ENCODE measurements at regions of chr16 and their contacts with region 1.

Region 1: DNA sequence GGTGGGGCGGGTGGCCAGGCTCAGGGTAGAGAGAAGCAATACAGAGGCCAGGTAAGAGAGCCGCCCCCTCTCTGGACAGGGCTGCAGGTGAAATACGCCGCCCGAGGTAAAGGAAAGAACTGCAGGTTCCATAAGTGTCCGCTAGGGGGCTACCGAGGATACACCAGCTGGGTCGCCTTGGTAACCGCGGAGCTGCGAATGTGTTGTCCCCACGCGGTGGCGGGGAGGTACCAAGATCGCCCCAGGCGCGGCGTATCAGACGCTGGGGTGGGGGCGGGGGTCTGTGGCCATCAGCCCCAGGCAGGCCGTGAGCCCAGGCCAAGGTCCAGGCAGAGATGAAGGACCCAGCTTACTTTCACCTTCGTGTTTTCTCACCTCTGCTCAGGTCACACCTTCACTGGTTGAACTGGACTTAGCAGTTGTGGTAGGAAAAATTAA is 18.4 kb upstream of the ZFP90 start:
- DNase-seq: peak; percentile 84
- H3K4me3 Mint-ChIP-seq: peak overlapping the region; percentile 21
- H3K27ac Mint-ChIP-seq: no peak overlapping the region
- H3K4me1 Mint-ChIP-seq: peaks cover 5% of the 10 kb centered on the region
- H3K27me3 Mint-ChIP-seq: peaks cover 5% of the 10 kb centered on the region

Region 2: GRCh38 chr16:68244903-68245853 is 275.5 kb before region 1 on chr16 and contains the start of gene PLA2G15:
- intact Hi-C with region 1: loop called (anchors 10 kb)
- DNase-seq: peak; percentile 92
- H3K4me3 Mint-ChIP-seq: peak within 1 kb of the TSS; percentile 94
- H3K27ac Mint-ChIP-seq: peak within 1 kb of the TSS; percentile 77
- H3K4me1 Mint-ChIP-seq: peaks cover 16% of the 10 kb centered on the region
- H3K27me3 Mint-ChIP-seq: no peaks in the 10 kb centered on the region
- total RNA-seq, gene PLA2G15: 9.0 and 10.3 TPM in 2 replicates

Region 3: GRCh38 chr16:68490829-68491575 is 29.7 kb before region 1 on chr16:
- intact Hi-C with region 1: no loop called
- DNase-seq: no peak
- H3K4me3 Mint-ChIP-seq: no peak overlapping the region
- H3K27ac Mint-ChIP-seq: no peak overlapping the region
- H3K4me1 Mint-ChIP-seq: no peaks in the 10 kb centered on the region
- H3K27me3 Mint-ChIP-seq: peaks cover 14% of the 10 kb centered on the region

Region 4: DNA sequence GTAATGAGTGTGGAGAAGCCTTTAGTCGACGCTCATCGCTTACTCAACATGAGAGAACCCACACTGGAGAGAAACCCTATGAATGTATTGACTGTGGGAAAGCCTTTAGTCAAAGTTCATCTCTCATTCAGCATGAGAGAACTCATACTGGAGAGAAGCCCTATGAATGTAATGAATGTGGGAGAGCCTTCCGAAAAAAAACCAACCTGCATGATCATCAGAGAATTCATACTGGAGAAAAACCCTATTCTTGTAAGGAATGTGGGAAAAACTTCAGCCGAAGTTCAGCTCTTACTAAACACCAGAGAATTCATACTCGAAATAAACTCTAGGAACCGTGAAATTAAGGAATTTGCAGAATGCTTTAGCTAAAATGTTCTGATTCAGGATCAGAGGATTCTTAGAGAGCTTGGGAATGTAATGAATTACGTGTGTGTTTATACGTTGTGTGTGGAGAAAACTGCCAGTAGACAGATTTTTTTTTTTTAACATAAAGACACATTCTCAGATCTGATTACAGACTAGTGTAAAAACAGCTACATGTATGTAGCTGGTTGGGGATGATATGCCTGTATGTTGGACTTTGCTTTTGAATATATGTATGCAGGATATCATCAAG is 43.8 kb after region 1 on chr16:
- intact Hi-C with region 1: no loop called
- DNase-seq: no peak
- H3K4me3 Mint-ChIP-seq: no peak overlapping the region
- H3K27ac Mint-ChIP-seq: no peak overlapping the region
- H3K4me1 Mint-ChIP-seq: no peaks in the 10 kb centered on the region
- H3K27me3 Mint-ChIP-seq: no peaks in the 10 kb centered on the region

Region 5: DNA sequence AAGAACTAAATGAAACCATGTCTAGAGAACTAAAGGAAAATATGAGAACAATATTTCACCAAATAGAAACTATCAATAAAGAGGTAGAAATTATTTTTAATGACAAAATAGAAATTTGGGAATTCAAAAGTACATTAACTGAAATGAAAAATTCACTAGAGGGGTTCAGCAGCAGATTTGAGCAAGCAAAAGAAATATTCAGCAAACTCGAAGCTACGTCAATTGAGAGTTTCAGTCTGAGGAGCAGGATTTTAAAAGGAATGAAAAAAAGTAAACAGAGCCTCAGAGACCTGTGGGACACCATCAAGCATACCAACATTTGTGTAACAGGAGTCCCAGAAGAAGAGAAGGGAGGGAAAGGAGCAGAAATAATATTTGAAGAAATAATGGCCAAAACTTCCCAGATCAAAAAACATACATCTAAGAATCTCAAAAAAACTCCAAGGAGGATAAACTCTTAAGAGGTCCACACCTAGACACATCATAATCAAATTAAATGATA is 56.7 kb after region 1 on chr16:
- intact Hi-C with region 1: no loop called
- DNase-seq: no peak
- H3K4me3 Mint-ChIP-seq: no peak overlapping the region
- H3K27ac Mint-ChIP-seq: no peak overlapping the region
- H3K4me1 Mint-ChIP-seq: no peaks in the 10 kb centered on the region
- H3K27me3 Mint-ChIP-seq: no peaks in the 10 kb centered on the region

Region 6: DNA sequence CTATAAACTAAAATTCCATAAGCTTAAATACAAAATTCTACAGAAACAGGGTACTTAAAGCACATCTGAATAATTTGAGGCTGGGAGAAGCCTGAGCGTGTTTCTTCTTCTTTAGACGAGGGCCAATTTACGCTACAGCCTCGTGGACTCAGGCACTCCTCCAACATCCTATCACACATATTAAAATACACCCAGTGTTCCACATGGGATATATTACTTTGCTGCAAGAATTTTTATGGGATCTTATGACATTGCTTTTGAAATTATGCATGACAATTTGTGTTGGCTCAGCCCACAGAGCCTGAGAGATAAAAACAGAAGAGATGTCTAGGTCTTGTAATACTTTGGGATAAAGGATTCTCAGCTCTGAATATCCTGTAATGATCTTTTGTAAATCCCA is 319.2 kb after region 1 on chr16:
- intact Hi-C with region 1: no loop called
- DNase-seq: no peak
- H3K4me3 Mint-ChIP-seq: no peak overlapping the region
- H3K27ac Mint-ChIP-seq: no peak overlapping the region
- H3K4me1 Mint-ChIP-seq: peaks cover 12% of the 10 kb centered on the region
- H3K27me3 Mint-ChIP-seq: no peaks in the 10 kb centered on the region

Measured in activated T-helper 2 cell treated with anti-CD3 and anti-CD28 coated beads, Interferon-gamma antibody, Interleukin-2, Interleukin-4, amounts not matched to agents 10 μg/mL and 5 μg/mL and 100 μg/mL, durations not matched to agents 14 hours and 24 hours and 36 hours (primary cell).